Heart right ventricle (tissue), 16 donors: ENCODE measurements at regions of chr11 and their contacts with region 1.

Region 1: GRCh38 chr11:69088676-69089146 is 40.0 kb downstream of the TPCN2 start:
- DNase-seq: peak; percentile 52 to 79
- ATAC-seq: peak; percentile 58 to 86 (median 72)
- H3K4me3 ChIP-seq: no peak overlapping the region
- H3K27ac ChIP-seq: peak overlapping the region in 5 of 10 donors; percentile 4 to 72 (median 53)
- H3K4me1 ChIP-seq: peaks cover 0 to 38% (median 17%) of the 10 kb centered on the region in 9 donors
- H3K27me3 ChIP-seq: no peaks in the 10 kb centered on the region
- CTCF ChIP-seq: peak; percentile 57 to 85 (median 79)

Region 2: DNA sequence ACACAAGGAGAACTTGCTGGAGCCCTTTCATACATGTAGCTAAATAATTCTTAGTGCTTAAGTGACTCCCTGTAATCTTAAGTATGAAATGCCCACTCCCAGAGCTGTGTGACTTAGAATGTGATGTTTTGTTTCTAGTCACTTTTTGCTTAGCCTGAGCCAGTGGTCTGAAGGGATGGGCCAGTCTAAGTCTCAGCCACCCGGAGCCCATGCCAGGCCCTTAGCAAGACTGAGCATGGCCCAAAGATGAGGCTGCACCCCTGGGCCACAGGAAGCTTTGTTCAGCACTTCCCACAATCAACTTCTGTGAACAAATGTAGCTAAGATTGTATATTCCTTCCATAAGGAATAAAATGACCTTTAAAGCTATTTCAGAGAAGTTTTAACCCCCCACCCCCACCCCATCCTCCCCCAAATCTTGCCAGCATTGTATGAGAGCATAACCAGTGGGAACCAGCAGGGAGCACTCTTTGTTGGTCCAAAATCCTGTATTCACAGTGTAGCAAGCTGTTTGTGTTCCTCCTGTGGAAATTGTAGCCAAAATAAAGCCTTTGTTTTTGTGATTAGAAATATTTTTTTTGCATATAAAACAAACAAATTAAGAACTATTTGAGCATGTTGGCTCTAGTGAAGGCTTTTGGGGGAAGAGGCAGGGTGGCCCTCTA is 478.1 kb before region 1 on chr11:
- intact Hi-C with region 1: loop called in 2 of 10 experiments (anchors 10 kb)
- DNase-seq: no peak
- ATAC-seq: peak in 2 of 8 donors; percentile 17 to 46
- H3K4me3 ChIP-seq: no peak overlapping the region
- H3K27ac ChIP-seq: no peak overlapping the region
- H3K4me1 ChIP-seq: no peaks in the 10 kb centered on the region
- H3K27me3 ChIP-seq: no peaks in the 10 kb centered on the region
- CTCF ChIP-seq: peak in 4 of 9 donors; percentile 14 to 41 (median 28)

Region 3: DNA sequence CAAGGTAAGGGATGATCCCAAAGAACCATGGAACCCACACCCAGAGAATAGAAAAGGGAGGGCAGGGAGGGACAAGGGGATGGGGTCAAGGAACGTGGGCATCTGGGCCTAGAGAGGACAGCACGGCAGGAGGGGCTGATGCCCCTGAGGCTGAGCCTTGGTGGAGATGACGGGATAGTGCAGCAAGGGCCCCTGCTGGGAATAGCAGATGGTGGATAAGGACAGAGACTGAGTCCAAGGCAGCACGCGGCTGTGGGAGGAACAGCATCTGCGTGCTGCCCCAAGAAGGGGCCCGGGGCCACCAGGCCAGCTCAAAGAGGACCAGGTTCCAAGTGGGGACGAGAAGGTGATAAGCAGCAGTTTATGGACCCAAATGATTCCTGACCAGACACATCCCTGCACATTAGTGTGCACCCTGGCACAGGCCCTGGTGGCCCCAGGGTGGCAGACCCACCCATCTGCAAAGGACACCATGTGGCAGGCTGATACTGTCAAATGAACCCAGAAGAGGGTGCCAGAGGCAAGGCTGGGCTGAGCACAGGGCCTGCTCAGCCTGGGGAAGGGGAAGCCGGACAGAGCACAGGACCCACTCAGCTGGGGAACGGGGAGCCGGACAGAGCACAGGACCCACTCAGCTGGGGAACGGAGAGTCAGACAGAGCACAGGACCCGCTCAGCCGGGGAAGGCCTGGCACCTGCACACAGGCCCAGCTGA is 324.6 kb before region 1 on chr11:
- intact Hi-C with region 1: loop called in 1 of 10 experiments (anchors 10 kb)
- DNase-seq: no peak
- ATAC-seq: peak in 6 of 8 donors; percentile 7 to 66 (median 52)
- H3K4me3 ChIP-seq: no peak overlapping the region
- H3K27ac ChIP-seq: no peak overlapping the region
- H3K4me1 ChIP-seq: no peaks in the 10 kb centered on the region
- H3K27me3 ChIP-seq: no peaks in the 10 kb centered on the region
- CTCF ChIP-seq: peak in 4 of 9 donors; percentile 15 to 40 (median 24)

Region 4: GRCh38 chr11:68903288-68904247 is 185.1 kb before region 1 on chr11 and contains the starts of genes IGHMBP2 and MRPL21:
- intact Hi-C with region 1: loop called in 2 of 10 experiments (anchors 10 kb)
- DNase-seq: peak; percentile 83 to 84
- ATAC-seq: peak; percentile 94 to 98 (median 97)
- H3K4me3 ChIP-seq: peak within 1 kb of the TSS; percentile 70 to 95 (median 86)
- H3K27ac ChIP-seq: peak within 1 kb of the TSS; percentile 26 to 94 (median 90)
- H3K4me1 ChIP-seq: peaks cover 13 to 43% (median 34%) of the 10 kb centered on the region in 9 donors
- H3K27me3 ChIP-seq: no peaks in the 10 kb centered on the region
- CTCF ChIP-seq: no peak
- total RNA-seq, gene IGHMBP2: 9.0 to 17.7 (median 12.1) TPM
- total RNA-seq, gene MRPL21: 63.2 to 138 (median 96.7) TPM

Region 5: DNA sequence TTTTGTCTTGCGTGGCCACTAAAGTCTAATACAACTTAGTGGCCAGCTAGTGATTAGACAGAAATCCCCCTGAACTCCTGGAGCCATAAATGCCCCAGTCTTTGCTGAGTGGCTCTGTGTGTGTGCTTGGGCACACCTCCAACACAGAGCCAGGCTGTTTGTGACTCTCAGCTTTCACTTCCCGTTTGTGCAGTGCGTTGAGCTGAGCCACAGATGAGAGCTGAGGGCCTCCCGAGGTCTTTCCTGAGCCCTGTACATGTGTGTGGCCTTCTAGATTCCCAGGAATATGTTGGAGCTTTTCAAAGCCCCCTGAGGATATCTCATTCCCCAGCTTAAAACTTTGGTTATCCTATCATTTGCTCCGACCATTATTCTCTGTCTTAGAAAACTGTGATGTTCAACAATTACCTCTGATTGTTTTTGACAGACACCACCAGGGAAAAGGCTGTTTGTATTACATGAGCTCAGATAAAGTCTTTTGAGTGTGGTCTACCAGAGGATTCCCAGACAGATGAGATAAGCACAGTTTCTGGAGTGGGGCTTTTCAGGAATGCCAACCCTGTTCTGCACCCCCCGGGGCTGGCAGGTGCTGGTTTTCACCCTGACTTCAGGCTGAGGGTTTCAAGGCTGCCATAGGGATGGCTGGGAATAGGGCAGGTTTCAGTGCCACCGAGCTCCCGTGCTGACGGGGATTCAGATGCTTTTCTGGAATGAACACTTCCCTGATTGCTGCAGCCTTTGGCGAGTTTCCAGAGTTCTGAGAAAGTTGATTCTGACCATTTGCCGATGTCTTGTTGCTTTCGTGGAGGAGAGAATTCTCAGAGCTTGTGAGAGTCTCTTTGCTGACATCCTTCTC is 161.2 kb before region 1 on chr11:
- intact Hi-C with region 1: loop called in 3 of 10 experiments (anchors 10 kb)
- DNase-seq: no peak
- ATAC-seq: peak in 7 of 8 donors; percentile 4 to 59 (median 49)
- H3K4me3 ChIP-seq: no peak overlapping the region
- H3K27ac ChIP-seq: peak overlapping the region in 9 of 10 donors; percentile 28 to 82 (median 49)
- H3K4me1 ChIP-seq: peaks cover 13 to 40% (median 30%) of the 10 kb centered on the region in 9 donors
- H3K27me3 ChIP-seq: no peaks in the 10 kb centered on the region
- CTCF ChIP-seq: no peak

Region 6: GRCh38 chr11:68942751-68943271 is 145.9 kb before region 1 on chr11:
- intact Hi-C with region 1: loop called in 2 of 10 experiments (anchors 10 kb)
- DNase-seq: no peak
- ATAC-seq: peak in 6 of 8 donors; percentile 13 to 46 (median 34)
- H3K4me3 ChIP-seq: no peak overlapping the region
- H3K27ac ChIP-seq: peak overlapping the region in 2 of 10 donors; percentile 3 to 28
- H3K4me1 ChIP-seq: peaks cover 0 to 14% (median 6%) of the 10 kb centered on the region in 9 donors
- H3K27me3 ChIP-seq: no peaks in the 10 kb centered on the region
- CTCF ChIP-seq: no peak